Testis (tissue), 5 donors: ENCODE measurements at regions of chr12 and their contacts with region 1.

Region 1: DNA sequence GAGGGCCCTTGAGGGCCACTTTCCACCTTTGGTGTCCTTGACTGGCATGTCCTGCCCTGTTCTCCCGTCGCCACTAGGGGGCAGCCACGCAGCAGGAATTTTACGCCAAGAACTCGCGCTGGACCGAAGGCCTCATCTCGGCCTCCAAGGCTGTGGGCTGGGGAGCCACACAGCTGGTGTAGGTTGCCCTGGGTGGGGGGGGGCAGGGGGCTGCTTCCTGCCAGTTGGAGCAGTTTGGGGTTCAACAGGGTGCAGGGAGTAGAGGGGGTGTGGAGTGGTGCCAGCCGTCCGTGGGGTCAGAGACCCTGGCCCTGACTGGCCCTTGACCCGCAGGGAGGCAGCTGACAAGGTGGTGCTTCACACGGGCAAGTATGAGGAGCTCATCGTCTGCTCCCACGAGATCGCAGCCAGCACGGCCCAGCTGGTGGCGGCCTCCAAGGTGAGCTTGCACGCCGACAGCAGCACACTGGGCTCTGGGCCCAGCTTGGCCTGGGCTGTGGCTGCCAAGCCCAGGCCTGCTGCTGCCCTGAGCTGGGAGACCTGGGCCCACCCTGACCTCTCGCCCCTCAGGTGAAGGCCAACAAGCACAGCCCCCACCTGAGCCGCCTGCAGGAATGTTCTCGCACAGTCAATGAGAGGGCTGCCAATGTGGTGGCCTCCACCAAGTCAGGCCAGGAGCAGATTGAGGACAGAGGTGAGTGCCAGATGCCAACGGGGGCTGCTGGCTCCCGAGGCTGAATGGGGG is 25.3 kb downstream of the HIP1R start:
- DNase-seq: peak; percentile 88
- H3K4me3 ChIP-seq: no peak overlapping the region
- H3K27ac ChIP-seq: peak overlapping the region; percentile 41 to 45
- H3K4me1 ChIP-seq: peaks cover 42% of the 10 kb centered on the region
- H3K27me3 ChIP-seq: no peaks in the 10 kb centered on the region
- CTCF ChIP-seq: peak; percentile 96 to 98 (median 97)
- POLR2A ChIP-seq: no peak

Region 2: GRCh38 chr12:122946690-122947341 is 86.3 kb after region 1 on chr12:
- intact Hi-C with region 1: loop called (anchors 5 kb)
- DNase-seq: peak; percentile 63
- H3K4me3 ChIP-seq: no peak overlapping the region
- H3K27ac ChIP-seq: peak overlapping the region in 1 of 2 donors; percentile 53
- H3K4me1 ChIP-seq: peaks cover 21% of the 10 kb centered on the region
- H3K27me3 ChIP-seq: no peaks in the 10 kb centered on the region
- CTCF ChIP-seq: no peak
- POLR2A ChIP-seq: no peak

Region 3: GRCh38 chr12:123043536-123044001 is 183.1 kb after region 1 on chr12:
- intact Hi-C with region 1: no loop called
- DNase-seq: peak; percentile 83
- H3K4me3 ChIP-seq: no peak overlapping the region
- H3K27ac ChIP-seq: peak overlapping the region in 1 of 2 donors; percentile 31
- H3K4me1 ChIP-seq: peaks cover 28% of the 10 kb centered on the region
- H3K27me3 ChIP-seq: no peaks in the 10 kb centered on the region
- CTCF ChIP-seq: peak; percentile 43 to 48 (median 47)
- POLR2A ChIP-seq: no peak

Region 4: DNA sequence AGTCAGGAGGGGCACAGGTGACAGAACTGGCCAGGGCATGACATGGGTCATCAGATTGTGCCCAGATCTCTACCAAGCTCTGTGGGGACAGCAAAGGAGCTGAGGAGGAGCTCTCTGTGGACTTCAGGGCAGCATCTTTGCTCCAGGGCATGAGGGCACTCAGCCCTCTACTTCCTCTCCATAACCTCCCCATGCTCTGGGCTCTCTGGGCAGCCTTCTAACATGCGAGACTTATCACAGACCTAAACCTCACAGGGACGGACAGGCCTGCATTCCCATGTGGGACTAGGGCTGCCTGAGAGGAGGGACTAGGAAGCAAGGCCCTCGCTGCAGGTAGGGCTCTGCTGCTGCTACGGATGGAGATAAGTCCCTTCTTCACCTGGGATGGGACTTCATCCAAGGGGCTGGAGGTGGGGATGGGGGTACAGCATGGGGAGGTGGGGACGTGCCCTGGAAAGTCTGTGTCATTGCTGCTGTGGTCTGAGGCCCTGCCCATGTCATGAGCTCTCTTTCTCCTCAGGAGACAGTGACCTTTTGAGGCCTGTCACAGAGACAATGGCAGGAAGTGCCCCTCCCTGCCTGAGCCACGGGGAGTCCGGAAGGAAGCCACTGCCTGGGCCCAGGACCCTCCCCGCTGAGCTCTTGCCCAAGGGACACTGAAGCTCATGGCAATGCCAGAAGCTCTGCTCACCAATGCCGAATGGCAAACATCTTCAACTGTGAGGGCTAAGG is 246.3 kb after region 1 on chr12:
- intact Hi-C with region 1: no loop called
- DNase-seq: no peak
- H3K4me3 ChIP-seq: no peak overlapping the region
- H3K27ac ChIP-seq: no peak overlapping the region
- H3K4me1 ChIP-seq: peaks cover 18% of the 10 kb centered on the region
- H3K27me3 ChIP-seq: no peaks in the 10 kb centered on the region
- CTCF ChIP-seq: no peak
- POLR2A ChIP-seq: no peak

Region 5: GRCh38 chr12:123150744-123151456 is 290.4 kb after region 1 on chr12 and contains the start of gene PITPNM2:
- intact Hi-C with region 1: no loop called
- DNase-seq: peak; percentile 54
- H3K4me3 ChIP-seq: peak within 1 kb of the TSS; percentile 73 to 75
- H3K27ac ChIP-seq: peak within 1 kb of the TSS; percentile 86 to 90
- H3K4me1 ChIP-seq: peaks cover 18% of the 10 kb centered on the region
- H3K27me3 ChIP-seq: no peaks in the 10 kb centered on the region
- CTCF ChIP-seq: peak in 1 of 3 experiments; percentile 54
- POLR2A ChIP-seq: no peak
- total RNA-seq, gene PITPNM2: 25.3 to 38.3 TPM